Activated naive CD8-positive, alpha-beta T cell treated with anti-CD3 and anti-CD28 coated beads, Interleukin-2, amount 10 ng/mL, durations not matched to agents 7 days and 5 days (primary cell): ENCODE measurements at regions of chr10 and their contacts with region 1.

Region 1: DNA sequence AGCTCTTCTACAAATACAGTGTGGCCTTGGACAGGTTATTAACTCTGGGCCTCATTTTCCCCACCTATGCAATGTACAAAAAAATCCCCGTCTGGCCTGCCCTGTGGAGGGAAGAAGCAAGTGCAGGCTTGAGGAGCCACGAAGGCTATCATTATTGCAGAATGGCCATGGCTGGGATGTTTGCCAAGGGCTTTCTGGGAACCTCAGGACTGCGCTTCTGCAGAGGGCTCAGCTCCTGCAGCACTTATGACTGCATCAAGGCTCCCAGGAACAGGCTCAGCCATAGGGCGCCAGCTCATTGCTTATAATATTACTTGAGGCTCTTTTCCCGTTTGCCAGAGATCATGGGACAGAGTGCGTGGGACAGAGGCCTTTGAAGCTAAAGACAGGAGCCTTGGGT is 20.5 kb upstream of the C10orf105 start:
- DNase-seq: no peak
- ATAC-seq: no peak
- H3K4me3 Mint-ChIP-seq: peak overlapping the region; percentile 5
- H3K27ac Mint-ChIP-seq: peak overlapping the region; percentile 93
- H3K4me1 Mint-ChIP-seq: peaks cover 83% of the 10 kb centered on the region
- H3K27me3 Mint-ChIP-seq: no peaks in the 10 kb centered on the region

Region 2: GRCh38 chr10:71756311-71757191 is 16.5 kb after region 1 on chr10:
- POLR2A ChIA-PET with region 1: interaction called, 15 read pairs
- DNase-seq: no peak
- ATAC-seq: peak; percentile 55
- H3K4me3 Mint-ChIP-seq: peak overlapping the region; percentile 76
- H3K27ac Mint-ChIP-seq: peak overlapping the region; percentile 93
- H3K4me1 Mint-ChIP-seq: peaks cover 79% of the 10 kb centered on the region
- H3K27me3 Mint-ChIP-seq: no peaks in the 10 kb centered on the region